ENCODE measurements at regions of chr17 and their contacts with region 1.

Region 1: GRCh38 chr17:46832945-46833839 is 14.7 kb upstream of the WNT3 start:
- DNase-seq: no peak
- H3K4me3 ChIP-seq: no peak overlapping the region
- H3K27ac ChIP-seq: no peak overlapping the region
- H3K4me1 ChIP-seq: no peaks in the 10 kb centered on the region
- H3K27me3 ChIP-seq: no peaks in the 10 kb centered on the region
- CTCF ChIP-seq: no peak

Region 2: DNA sequence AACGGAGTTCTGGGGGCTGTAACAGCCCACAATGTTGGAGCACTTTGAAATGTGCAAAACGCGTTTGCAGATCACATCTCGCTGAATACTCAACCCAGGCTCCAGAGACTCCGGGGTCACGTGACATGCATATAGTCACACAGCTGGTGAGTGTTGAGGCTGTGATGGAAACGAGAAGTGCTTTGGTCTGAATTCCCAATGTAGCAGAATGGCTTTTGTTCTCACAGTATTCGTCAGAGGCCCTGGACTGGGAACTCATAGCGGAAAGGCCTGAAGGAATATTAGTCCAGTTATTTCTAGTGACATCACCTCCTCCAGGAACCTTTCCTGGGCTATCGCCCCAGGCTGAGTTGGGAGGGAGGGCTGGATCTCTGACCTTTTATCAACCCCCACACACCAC is 1144.8 kb before region 1 on chr17:
- CTCF ChIA-PET with region 1: no interaction called
- POLR2A ChIA-PET with region 1: no interaction called
- intact Hi-C with region 1: loop called (anchors 10 kb)
- DNase-seq: no peak
- H3K4me3 ChIP-seq: no peak overlapping the region
- H3K27ac ChIP-seq: no peak overlapping the region
- H3K4me1 ChIP-seq: no peaks in the 10 kb centered on the region
- H3K27me3 ChIP-seq: no peaks in the 10 kb centered on the region
- CTCF ChIP-seq: no peak

Measured in A673 (cell line).